ENCODE measurements at regions of chr4 and their contacts with region 1.

Region 1: DNA sequence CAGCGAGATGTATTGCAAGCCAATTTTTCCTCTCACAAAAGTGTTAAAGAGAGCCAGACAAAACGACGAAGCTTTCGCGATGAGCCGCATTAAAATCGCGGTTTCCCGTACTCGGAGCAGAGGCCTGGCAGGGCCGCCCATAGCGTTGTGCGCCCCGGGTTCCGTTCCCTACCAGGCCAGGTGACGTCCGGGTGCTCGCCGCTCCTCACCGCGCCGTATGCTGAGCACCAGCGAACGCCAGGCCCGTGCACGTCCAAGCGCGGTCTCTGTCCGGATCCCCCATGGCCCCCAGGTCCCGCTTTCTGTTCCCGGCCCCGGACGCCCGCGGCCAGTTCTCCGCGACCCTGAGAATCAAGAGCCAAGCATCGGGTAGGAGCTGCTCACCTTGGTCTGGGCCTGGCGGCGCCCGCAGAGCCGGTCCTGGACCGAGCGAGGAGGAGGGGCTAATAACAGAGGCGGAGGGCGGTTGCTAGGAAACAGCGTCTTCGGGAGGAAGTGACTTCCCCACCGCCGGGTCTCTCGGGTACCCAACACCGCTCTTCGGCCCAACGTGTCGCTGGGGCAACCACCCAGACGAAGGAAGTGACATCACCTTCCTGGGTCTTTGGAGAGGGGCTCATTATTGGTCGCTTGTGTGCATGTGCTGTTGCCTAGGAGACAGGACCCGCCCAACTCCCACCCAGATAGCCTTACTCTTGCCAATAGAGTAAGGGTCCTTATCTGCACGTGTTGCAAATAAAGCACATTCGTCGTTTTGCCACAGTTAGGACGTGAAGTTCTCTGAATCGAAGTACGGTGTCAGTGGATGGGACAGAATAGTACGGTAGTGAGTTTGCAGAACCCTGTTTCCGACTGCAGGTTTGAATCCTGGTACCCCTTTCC is at the start of gene MAP9:
- DNase-seq: peak; percentile 67
- H3K4me3 ChIP-seq: peak within 1 kb of the TSS; percentile 80
- CTCF ChIP-seq: no peak

Region 2: GRCh38 chr4:154858166-154858565 is 518.5 kb before region 1 on chr4:
- CTCF ChIA-PET with region 1: no interaction called
- POLR2A ChIA-PET with region 1: no interaction called
- DNase-seq: no peak
- H3K4me3 ChIP-seq: no peak overlapping the region
- CTCF ChIP-seq: no peak

Region 3: DNA sequence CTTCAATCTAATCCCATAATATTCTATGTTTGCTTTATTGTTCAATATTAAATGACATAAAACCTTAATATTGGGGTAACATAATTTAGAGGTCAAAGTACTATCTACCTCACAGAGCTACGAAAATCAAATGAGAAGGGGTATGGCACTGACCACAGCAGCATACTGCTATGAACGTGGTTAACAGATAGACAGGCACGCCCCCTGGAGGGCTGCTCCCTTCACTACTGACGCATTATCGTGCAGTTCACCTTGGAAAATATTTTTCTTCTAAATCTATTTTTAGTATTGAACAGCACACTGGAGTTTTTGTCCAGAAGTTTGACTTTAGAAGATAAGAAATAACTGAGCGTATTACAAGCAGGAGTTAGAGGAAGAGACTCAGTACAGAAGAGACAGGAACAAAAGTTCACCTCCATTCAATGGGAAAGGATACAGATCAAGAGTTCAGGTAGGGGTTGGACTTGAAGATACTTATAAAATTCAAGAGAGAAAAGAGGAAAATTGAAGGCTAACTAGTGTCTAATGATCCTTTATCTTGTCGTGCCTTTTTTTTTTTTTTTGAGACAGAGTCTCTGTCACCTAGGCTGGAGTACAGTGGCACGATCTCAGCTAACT is 22.6 kb before region 1 on chr4:
- CTCF ChIA-PET with region 1: interaction called, 11 read pairs
- POLR2A ChIA-PET with region 1: no interaction called
- DNase-seq: no peak
- H3K4me3 ChIP-seq: no peak overlapping the region
- CTCF ChIP-seq: peak; percentile 72

Region 4: GRCh38 chr4:155392481-155393184 is 16.0 kb after region 1 on chr4:
- CTCF ChIA-PET with region 1: no interaction called
- POLR2A ChIA-PET with region 1: no interaction called
- DNase-seq: peak; percentile 28
- H3K4me3 ChIP-seq: no peak overlapping the region
- CTCF ChIP-seq: no peak

Region 5: DNA sequence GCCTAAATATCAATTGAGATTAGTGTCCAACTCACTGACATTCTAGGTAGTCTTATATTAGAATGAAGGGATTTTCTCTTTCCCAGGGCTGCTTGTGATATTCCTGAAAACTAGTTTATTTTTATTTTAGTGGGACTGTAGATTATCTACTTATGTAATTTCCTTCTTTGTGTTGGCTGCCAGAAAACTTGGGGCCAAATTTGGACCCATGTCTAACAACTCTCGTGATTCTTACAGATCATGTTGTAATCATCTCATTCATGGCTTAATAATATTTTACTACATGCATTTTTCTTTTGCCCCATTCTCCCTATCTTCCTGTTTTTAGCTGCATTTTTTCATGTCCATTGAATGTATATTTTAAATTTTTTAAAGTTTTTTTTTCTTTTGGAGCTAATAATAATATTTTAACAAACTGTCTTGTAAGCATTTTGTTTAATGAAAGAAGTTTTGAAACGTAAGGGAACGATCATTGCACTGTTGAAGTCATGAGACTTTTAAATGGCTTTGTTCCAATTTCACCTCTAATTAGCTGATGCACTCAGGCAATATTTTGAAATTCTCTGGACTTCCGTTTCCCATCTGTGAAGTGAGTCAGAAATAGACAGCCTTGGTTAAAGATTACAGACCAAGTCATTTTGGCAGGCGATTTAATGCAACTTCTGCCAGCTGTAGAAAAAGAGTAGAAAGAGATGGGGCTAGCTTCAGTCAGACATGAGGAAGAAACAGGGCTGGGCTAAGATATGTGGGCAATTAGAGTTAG is 512.6 kb after region 1 on chr4:
- CTCF ChIA-PET with region 1: no interaction called
- POLR2A ChIA-PET with region 1: no interaction called
- DNase-seq: peak; percentile 16
- H3K4me3 ChIP-seq: no peak overlapping the region
- CTCF ChIP-seq: no peak